ENCODE measurements at regions of chr1 and their contacts with region 1.

Region 1: GRCh38 chr1:177948336-177948972 is 21.4 kb downstream of the SEC16B start:
- DNase-seq: peak; percentile 44
- H3K4me3 Mint-ChIP-seq: no peak overlapping the region
- H3K27ac Mint-ChIP-seq: no peak overlapping the region
- H3K4me1 Mint-ChIP-seq: no peaks in the 10 kb centered on the region
- H3K27me3 Mint-ChIP-seq: peaks cover 7% of the 10 kb centered on the region

Region 2: DNA sequence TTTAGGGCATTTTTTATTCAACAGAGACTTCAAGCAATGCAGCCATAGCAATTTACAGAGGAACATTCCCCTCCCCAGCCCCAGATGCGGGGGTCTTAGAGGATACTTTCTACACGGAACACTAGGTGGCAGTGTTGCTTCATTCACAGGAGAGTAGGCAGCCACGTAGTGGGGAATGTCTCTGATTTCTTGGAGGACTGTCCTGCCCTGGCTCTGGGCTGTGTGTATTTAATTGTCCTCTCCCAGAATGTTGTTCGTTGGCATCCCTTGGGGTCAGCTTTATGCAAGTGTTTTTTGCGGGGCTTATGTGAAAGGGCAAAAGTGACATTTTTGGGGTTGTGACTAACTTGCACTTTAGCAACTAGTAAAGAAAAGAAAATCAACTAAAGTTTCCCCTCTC is 1388.6 kb before region 1 on chr1:
- CTCF ChIA-PET with region 1: no interaction called
- intact Hi-C with region 1: loop called (anchors 5 kb)
- DNase-seq: peak; percentile 38
- H3K4me3 Mint-ChIP-seq: no peak overlapping the region
- H3K27ac Mint-ChIP-seq: no peak overlapping the region
- H3K4me1 Mint-ChIP-seq: no peaks in the 10 kb centered on the region
- H3K27me3 Mint-ChIP-seq: peaks cover 12% of the 10 kb centered on the region

Region 3: DNA sequence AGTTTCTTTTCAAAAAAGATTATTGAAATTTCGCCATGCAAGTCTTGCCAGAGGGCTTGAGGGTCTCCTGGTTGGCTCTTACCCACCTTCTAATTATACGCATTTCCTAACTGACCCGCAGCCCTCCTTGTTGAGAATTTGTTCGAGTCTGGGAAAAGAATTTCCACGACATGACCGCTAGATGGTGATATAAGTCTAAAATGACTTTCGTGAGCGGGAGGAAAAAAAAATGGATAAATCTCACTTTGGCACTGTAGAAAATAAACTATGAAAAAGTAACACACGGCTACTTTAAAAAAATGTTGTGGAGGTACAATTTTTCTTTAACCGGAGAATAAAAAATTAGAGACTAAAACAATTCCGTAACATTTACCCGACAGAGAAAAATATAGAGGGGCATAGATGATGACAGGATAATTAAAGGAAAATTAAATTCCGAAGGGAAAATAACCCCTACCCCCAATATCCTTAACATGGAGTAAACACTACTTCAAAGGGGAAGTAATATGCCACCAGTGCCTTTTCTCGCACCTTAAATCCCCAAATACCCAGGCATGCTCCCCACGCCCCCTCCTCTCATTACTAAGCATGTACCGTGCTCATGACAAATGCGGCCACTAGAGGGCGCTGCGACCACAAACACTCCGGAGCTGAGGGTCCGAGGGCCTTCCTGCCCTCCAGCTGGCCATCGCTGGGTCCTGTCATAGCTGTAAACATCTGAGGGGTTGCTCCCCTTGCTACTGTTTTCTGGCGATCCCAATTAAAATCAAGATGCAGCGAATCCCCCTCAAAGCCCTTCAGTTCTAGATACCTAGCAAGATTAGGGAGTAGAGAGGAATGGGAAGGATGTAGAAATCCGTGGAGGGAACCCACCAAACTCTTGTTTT is 1050.9 kb before region 1 on chr1:
- CTCF ChIA-PET with region 1: interaction called, 4 read pairs
- intact Hi-C with region 1: loop called (anchors 1 kb)
- DNase-seq: peak; percentile 53
- H3K4me3 Mint-ChIP-seq: no peak overlapping the region
- H3K27ac Mint-ChIP-seq: no peak overlapping the region
- H3K4me1 Mint-ChIP-seq: peaks cover 4% of the 10 kb centered on the region
- H3K27me3 Mint-ChIP-seq: peaks cover 12% of the 10 kb centered on the region

Region 4: DNA sequence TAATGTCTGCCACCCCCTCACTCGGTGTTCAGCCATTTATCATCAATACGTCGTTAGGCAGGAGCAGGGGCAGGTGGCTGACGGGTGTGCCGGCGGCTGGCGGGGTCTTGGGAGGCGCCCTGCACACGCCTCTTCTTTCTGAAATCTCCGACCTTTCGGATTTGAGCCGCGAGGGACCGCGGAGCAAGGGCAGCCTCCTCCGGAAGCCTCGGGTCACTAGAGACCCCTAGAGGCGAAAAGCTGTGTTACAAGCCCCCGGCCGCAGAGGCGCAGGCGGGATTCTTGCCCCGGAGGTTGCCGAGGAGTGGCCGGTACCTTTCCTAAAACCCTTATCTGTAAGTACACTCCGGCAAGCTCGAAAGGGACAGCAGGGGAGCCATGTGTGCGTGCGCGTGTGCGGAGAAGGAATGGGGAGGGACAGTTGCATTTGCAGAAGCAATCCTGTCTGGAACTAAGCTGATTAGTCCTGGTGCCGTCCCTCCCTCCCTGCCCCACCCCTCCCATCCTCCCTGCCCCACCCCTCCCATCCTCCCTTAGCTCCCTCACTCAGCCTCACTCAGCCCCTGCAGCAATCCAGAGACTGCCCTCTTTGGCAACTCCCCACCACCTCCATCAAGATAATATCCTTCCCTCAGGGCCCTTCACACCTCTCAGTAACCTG is 766.7 kb before region 1 on chr1:
- CTCF ChIA-PET with region 1: no interaction called
- intact Hi-C with region 1: loop called (anchors 10 kb)
- DNase-seq: peak; percentile 42
- H3K4me3 Mint-ChIP-seq: peak overlapping the region; percentile 36
- H3K27ac Mint-ChIP-seq: no peak overlapping the region
- H3K4me1 Mint-ChIP-seq: peaks cover 8% of the 10 kb centered on the region
- H3K27me3 Mint-ChIP-seq: peaks cover 48% of the 10 kb centered on the region

Region 5: DNA sequence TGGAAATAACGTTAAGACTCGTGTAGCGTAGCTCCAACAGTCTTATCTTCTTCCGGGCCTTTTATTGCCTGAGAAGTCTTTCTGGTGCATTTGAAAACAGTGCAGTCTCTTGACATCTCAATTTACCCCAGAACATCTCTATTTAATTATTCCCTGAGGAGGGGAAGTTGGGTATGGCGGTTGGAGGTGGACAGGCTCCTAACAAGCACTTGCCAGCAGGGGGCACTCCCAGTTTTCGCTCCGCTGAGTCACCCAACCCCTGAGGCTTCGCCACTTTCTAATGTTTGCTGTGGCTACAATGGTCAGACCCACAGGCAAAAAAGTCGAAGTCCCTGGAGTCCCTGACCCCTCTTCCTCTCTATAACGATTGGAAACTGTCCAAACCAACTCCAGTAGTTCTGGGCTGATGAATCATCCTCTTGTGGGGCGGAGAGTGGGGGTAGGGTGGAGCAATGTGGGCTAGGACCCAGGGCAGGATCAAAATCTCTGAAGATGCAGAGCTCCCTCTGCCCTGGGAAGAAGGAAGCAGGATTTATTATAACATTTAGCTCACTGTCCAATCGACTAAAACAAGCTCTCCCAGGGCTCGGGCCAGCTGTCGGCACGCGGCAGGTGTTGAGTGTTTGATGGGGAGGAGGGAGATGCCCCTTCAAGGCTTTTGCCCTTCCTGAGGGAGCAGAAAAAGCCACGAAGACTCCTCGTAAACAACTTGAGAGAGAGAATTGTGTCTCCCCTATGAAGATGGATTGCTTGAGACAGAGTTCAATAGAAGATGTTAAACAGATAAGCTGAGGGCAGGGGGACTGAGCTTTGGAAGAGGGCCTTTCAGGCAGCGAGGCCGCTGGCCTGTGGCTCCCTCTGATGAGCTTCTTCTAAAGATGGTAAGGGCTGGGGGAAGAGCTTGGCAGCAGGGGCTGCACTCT is 692.0 kb before region 1 on chr1:
- CTCF ChIA-PET with region 1: no interaction called
- intact Hi-C with region 1: loop called (anchors 5 kb)
- DNase-seq: peak; percentile 15
- H3K4me3 Mint-ChIP-seq: no peak overlapping the region
- H3K27ac Mint-ChIP-seq: no peak overlapping the region
- H3K4me1 Mint-ChIP-seq: no peaks in the 10 kb centered on the region
- H3K27me3 Mint-ChIP-seq: peaks cover 7% of the 10 kb centered on the region

Region 6: DNA sequence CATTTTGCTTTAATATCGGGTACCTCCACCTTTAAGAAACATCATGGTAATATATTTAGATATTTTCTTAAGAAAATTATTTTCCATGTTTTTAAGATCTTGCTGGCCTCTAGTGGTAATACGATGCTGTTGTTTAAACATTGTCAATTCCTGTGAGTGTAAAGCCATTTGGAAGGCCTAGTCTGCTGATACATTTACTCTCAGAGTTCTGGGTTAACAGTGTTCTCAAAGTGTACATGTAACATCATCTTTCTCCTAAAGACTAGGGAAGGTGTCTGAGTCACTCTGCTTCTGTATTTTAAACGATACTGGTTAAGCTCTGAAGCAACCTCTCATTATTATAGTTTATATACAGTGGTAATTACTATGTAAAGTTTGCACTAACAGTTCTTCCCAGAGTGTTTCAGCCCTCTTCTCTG is 334.5 kb after region 1 on chr1:
- CTCF ChIA-PET with region 1: no interaction called
- intact Hi-C with region 1: loop called (anchors 5 kb)
- DNase-seq: no peak
- H3K4me3 Mint-ChIP-seq: no peak overlapping the region
- H3K27ac Mint-ChIP-seq: no peak overlapping the region
- H3K4me1 Mint-ChIP-seq: no peaks in the 10 kb centered on the region
- H3K27me3 Mint-ChIP-seq: no peaks in the 10 kb centered on the region

Measured in activated naive CD4-positive, alpha-beta T cell treated with anti-CD3 and anti-CD28 coated beads for 36 hours (primary cell).